K562 (cell line): ENCODE measurements at regions of chr3 and their contacts with region 1.

Region 1: GRCh38 chr3:183988216-183988790 is 29.4 kb downstream of the ABCC5 start:
- DNase-seq: peak; percentile 59 to 86 (median 72)
- ATAC-seq: peak; percentile 99
- H3K4me3 ChIP-seq: no peak overlapping the region
- H3K27ac ChIP-seq: peak overlapping the region; percentile 61; the same call in 2 of the 3 replicates
- H3K4me1 ChIP-seq: peaks cover 10 to 15% of the 10 kb centered on the region in 2 experiments; a peak in 4 of 5 replicates
- H3K27me3 ChIP-seq: no peaks in the 10 kb centered on the region
- CTCF ChIP-seq: peak in 2 of 3 experiments; percentile 11 to 21; a peak in 1 of 6 replicates
- EP300 ChIP-seq: peak; percentile 71
- POLR2A ChIP-seq: no peak
- RAD21 ChIP-seq: peak; percentile 28 to 42

Region 2: DNA sequence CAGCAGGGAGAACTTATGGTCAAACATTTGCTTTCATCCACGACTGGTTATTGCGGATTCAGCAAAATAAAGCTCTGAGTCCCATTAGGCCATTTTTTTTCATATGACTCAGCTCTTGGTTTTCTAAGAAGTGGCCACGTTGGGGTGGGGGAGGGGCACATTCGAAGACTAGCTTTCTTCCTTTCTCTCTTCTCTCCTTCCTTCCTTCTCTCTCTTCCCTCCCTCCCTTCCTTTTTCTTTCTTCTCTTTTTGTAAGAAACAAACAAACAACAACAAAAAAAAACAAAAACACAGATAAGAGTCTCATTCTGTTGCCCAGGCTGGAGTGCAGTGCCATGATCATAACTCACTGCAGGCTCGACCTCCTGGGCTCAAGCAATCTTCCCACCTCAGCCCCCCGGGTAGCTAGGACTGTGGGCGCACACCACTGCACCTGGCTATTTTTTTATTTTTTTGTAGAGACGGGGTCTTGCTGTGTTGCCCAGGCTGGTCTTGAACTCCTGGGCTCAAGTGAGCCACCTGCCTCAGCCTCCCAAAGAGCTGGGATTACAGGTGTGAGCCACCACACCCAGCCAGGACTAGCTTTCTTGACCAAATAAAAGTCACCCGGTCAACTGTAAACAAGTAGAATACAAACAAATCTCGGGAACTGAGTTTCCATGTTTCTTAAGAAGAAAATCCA is 12.2 kb before region 1 on chr3:
- CTCF ChIA-PET with region 1: no interaction called
- POLR2A ChIA-PET with region 1: interaction called, 12 read pairs
- in situ Hi-C with region 1: no loop called
- intact Hi-C with region 1: no loop called
- DNase-seq: peak in 3 of 4 experiments; percentile 35 to 85 (median 71)
- ATAC-seq: peak; percentile 72
- H3K4me3 ChIP-seq: no peak overlapping the region
- H3K27ac ChIP-seq: peak overlapping the region; percentile 75
- H3K4me1 ChIP-seq: peaks cover 6 to 23% of the 10 kb centered on the region in 2 experiments; a peak in 4 of 5 replicates
- H3K27me3 ChIP-seq: no peaks in the 10 kb centered on the region
- CTCF ChIP-seq: no peak
- EP300 ChIP-seq: peak; percentile 84
- POLR2A ChIP-seq: no peak; the same call in 1 of the 2 replicates
- RAD21 ChIP-seq: no peak

Region 3: DNA sequence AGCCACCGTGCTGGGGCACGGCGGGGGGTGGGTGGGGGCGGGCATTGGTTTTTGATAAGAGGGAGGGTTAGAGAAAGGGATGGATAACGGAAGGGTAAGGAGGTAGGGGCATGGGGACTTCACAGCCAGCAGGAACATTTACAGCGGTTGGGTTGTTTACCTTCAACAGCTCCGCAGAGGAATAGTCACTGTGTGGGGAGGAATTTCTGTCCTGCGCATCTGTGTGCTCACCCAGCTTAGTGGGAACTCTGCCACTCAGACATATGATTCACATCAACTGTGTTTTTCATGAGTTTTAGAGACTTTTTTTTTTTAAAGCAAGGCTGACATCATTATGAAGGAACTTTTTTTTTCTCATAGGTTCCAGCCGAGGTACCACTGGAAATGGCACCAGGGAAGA is 411.1 kb after region 1 on chr3:
- CTCF ChIA-PET with region 1: no interaction called
- POLR2A ChIA-PET with region 1: no interaction called
- in situ Hi-C with region 1: no loop called
- intact Hi-C with region 1: no loop called
- DNase-seq: no peak
- ATAC-seq: no peak
- H3K4me3 ChIP-seq: no peak overlapping the region
- H3K27ac ChIP-seq: no peak overlapping the region
- H3K4me1 ChIP-seq: no peaks in the 10 kb centered on the region
- H3K27me3 ChIP-seq: peaks cover 43 to 56% of the 10 kb centered on the region in 2 experiments
- CTCF ChIP-seq: no peak
- EP300 ChIP-seq: no peak
- POLR2A ChIP-seq: no peak
- RAD21 ChIP-seq: no peak